GM13977 (cell line): ENCODE measurements at regions of chr15 and their contacts with region 1.

Region 1: GRCh38 chr15:92244703-92245102 is 149.0 kb upstream of the ST8SIA2 start:
- DNase-seq: no peak
- CTCF ChIP-seq: no peak

Region 2: DNA sequence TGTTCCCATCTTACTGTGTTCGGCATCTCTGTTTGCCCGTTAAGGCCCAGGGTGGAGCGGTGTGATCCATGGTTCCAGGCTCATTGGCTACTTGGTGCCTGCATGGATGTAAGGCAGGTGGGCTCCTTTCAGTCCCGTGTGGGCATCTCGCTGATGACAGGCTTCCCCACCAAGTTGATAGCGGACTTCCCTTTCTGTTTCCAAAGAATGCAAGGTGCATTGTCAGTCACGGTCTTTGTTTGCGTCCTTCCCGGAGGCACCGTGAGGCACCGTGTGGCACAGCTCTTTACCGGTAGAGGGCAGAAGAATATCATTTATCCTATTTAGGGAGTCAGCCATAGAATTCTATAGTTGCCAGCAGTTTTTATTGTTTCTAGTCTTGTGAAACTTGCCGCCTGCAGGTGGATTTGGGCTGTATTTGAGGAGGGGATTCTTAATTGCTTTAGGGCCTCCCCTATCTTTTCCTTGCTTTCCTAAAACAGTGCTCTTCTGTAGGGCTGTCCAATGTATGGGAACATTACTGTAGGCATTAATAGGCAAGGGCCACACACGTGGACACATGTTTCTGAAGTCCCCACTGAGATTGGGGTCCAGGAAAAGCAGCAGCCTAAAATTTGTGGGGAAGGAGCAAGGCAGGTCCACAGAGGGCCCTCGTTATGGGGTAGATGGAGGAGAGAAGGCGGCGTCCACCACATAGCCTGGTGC is 147.1 kb before region 1 on chr15:
- in situ Hi-C with region 1: loop called (anchors 10 kb)
- DNase-seq: peak; percentile 68
- CTCF ChIP-seq: peak; percentile 88